ENCODE measurements at regions of chr4 and their contacts with region 1.

Region 1: GRCh38 chr4:89226665-89227574 is 80.7 kb downstream of the GPRIN3 start:
- DNase-seq: peak; percentile 87
- ATAC-seq: peak; percentile 96

Region 2: GRCh38 chr4:89331686-89332544 is 105.0 kb after region 1 on chr4:
- intact Hi-C with region 1: no loop called
- DNase-seq: no peak
- ATAC-seq: no peak

Region 3: GRCh38 chr4:89438102-89438831 is 211.3 kb after region 1 on chr4:
- intact Hi-C with region 1: loop called (anchors 5 kb)
- DNase-seq: peak; percentile 53
- ATAC-seq: no peak